ENCODE measurements at regions of chr18 and their contacts with region 1.

Region 1: DNA sequence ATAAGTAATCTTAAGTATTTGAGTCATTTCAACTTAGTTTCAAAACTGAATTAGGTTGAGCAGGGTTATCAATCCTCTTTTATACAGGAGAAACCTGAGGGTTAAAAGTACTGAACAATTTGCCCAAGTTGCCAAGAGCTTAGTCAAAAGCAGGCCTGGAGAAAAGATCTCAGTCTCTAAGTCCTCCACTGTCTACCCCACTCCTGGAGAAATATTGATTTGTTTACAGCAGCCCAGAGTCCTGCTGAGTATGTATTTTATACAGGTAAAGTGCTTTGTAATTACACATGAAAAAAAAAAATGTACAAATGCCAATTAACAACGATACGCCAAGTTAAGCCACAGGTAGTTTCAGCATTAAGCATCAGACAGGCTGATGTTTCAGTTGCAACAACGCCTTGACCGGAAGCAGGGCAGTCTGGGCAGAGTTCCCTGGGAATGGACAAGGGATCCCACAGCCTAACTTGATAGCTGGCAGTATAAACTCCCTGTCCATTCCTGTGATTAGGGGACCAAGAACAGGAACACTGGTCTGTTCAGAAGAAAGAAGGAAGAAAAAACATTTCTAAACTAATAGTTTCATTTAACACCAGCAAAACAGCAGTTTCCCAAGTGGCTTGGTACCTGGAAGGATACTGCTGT is 132.9 kb downstream of the MYO5B start:
- DNase-seq: peak in 1 of 2 donors; percentile 67
- ATAC-seq: no peak
- H3K4me3 ChIP-seq: no peak overlapping the region
- H3K27ac ChIP-seq: no peak overlapping the region
- H3K4me1 ChIP-seq: no peaks in the 10 kb centered on the region
- H3K27me3 ChIP-seq: no peaks in the 10 kb centered on the region

Region 2: GRCh38 chr18:50079581-50080295 is 17.7 kb after region 1 on chr18:
- intact Hi-C with region 1: loop called in 1 of 2 experiments (anchors 2 kb)
- DNase-seq: peak; percentile 61 to 77
- ATAC-seq: no peak
- H3K4me3 ChIP-seq: no peak overlapping the region
- H3K27ac ChIP-seq: peak overlapping the region in 1 of 2 donors; percentile 52
- H3K4me1 ChIP-seq: peaks cover 3 to 11% of the 10 kb centered on the region in 2 donors
- H3K27me3 ChIP-seq: no peaks in the 10 kb centered on the region

Measured in aorta (tissue), 5 donors.